Activated naive CD4-positive, alpha-beta T cell treated with anti-CD3 and anti-CD28 coated beads, Interleukin-2, amount 10 ng/mL, durations not matched to agents 7 days and 5 days (primary cell): ENCODE measurements at regions of chr4 and their contacts with region 1.

Region 1: GRCh38 chr4:77600521-77601451 is 4.8 kb upstream of the CXCL13 start:
- DNase-seq: peak; percentile 53
- H3K4me3 Mint-ChIP-seq: no peak overlapping the region
- H3K27ac Mint-ChIP-seq: no peak overlapping the region
- H3K4me1 Mint-ChIP-seq: peaks cover 4% of the 10 kb centered on the region
- H3K27me3 Mint-ChIP-seq: peaks cover 22% of the 10 kb centered on the region

Region 2: GRCh38 chr4:77367638-77368037 is 233.1 kb before region 1 on chr4:
- CTCF ChIA-PET with region 1: interaction called, 14 read pairs
- DNase-seq: no peak
- H3K4me3 Mint-ChIP-seq: no peak overlapping the region
- H3K27ac Mint-ChIP-seq: no peak overlapping the region
- H3K4me1 Mint-ChIP-seq: no peaks in the 10 kb centered on the region
- H3K27me3 Mint-ChIP-seq: peaks cover 10% of the 10 kb centered on the region

Region 3: DNA sequence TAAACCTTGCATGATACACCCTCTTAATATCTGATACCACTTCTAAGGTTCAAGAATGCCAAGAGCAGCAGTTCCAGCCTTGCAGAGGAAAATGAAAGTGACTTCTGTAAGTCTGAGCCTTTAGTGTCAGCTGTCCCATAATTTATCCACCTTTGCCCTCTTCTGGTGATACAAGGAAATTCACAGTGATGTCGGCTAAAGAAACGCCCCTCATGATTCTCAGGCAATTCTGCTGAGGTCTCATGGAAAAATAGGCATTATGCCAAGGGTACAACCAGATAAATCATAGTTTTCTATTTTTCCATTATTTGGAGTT is 167.4 kb before region 1 on chr4:
- CTCF ChIA-PET with region 1: interaction called, 47 read pairs
- DNase-seq: peak; percentile 29
- H3K4me3 Mint-ChIP-seq: no peak overlapping the region
- H3K27ac Mint-ChIP-seq: no peak overlapping the region
- H3K4me1 Mint-ChIP-seq: peaks cover 3% of the 10 kb centered on the region
- H3K27me3 Mint-ChIP-seq: no peaks in the 10 kb centered on the region

Region 4: GRCh38 chr4:77473509-77473908 is 127.3 kb before region 1 on chr4:
- CTCF ChIA-PET with region 1: interaction called, 222 read pairs
- DNase-seq: no peak
- H3K4me3 Mint-ChIP-seq: no peak overlapping the region
- H3K27ac Mint-ChIP-seq: no peak overlapping the region
- H3K4me1 Mint-ChIP-seq: no peaks in the 10 kb centered on the region
- H3K27me3 Mint-ChIP-seq: peaks cover 26% of the 10 kb centered on the region

Region 5: DNA sequence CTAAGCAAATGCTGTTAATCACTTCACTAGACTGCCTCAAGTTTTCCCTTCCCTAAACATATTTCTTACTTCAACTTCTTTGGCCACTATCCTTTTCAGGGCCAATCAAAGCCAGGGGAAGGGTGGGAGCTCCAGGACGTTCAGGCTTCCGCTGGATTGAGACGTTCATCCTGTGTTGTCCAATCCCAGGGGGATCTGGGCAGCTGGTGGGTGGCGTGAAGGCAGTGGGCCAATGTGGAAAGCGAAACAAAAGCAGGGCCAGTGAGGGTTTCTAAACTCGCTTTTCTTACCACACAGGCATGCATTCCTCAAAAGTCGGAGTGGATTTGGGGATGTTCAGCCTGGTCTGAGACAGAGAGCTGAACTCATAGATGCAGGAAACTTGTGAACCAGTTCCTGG is 12.5 kb after region 1 on chr4:
- CTCF ChIA-PET with region 1: interaction called, 117 read pairs
- DNase-seq: no peak
- H3K4me3 Mint-ChIP-seq: no peak overlapping the region
- H3K27ac Mint-ChIP-seq: no peak overlapping the region
- H3K4me1 Mint-ChIP-seq: no peaks in the 10 kb centered on the region
- H3K27me3 Mint-ChIP-seq: peaks cover 12% of the 10 kb centered on the region